HCT116 (cell line): ENCODE measurements at regions of chr12 and their contacts with region 1.

Region 1: DNA sequence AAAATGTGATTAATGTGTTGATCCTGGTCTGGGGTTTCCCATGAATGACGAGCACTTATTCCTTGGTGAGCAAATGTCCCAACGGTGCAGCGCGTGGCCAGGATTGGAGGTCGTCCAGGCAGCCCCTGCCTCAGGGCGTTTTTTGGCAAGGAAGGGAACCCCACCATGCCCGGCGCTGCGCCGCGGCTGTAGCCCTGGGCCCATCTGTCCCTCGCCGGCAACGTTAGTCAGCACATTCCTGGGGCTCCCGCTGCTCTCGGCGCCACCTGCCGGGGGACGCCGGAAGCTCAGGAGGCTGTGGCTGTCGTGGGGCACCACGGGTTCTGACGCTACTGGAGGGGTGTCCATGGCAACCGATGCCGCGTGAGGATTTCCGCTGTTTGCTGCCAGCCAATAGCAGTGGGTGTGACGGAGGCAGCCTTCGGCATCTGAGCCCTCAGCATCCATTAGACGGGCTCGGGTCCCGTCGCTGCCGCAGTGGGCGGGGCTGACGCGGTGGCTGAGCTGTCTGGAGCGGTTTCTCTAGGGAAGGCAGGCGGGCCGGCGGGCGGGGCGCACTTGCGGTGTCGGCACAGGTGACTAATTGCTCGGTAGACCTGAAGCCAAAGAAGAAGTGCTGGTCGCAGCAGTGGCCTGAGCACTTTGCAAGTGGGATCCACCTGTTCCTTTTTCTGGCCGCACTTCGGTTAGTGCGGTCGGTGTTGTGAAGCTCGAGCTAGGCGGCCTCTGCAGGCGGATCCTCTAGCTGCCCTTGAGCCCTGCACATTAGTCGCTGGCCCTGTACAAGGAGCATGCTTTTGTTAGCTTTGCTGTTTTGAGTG is 29.5 kb downstream of the RAB35 start:
- DNase-seq: peak; percentile 98
- ATAC-seq: peak; percentile 94
- H3K4me3 ChIP-seq: peak overlapping the region; percentile 42 to 52
- H3K27ac ChIP-seq: peak overlapping the region; percentile 67
- H3K4me1 ChIP-seq: peaks cover 18 to 21% of the 10 kb centered on the region in 2 experiments
- H3K27me3 ChIP-seq: no peaks in the 10 kb centered on the region
- CTCF ChIP-seq: peak; percentile 87 to 98 (median 92)
- POLR2A ChIP-seq: no peak
- RAD21 ChIP-seq: peak; percentile 87

Region 2: GRCh38 chr12:119931402-119931801 is 155.6 kb before region 1 on chr12:
- CTCF ChIA-PET with region 1: interaction called, 3 read pairs
- POLR2A ChIA-PET with region 1: no interaction called
- RAD21 ChIA-PET with region 1: no interaction called
- intact Hi-C with region 1: loop called (anchors 2 kb)
- DNase-seq: no peak
- ATAC-seq: no peak
- H3K4me3 ChIP-seq: no peak overlapping the region
- H3K27ac ChIP-seq: no peak overlapping the region
- H3K4me1 ChIP-seq: no peaks in the 10 kb centered on the region
- H3K27me3 ChIP-seq: no peaks in the 10 kb centered on the region
- CTCF ChIP-seq: no peak
- POLR2A ChIP-seq: no peak
- RAD21 ChIP-seq: no peak

Region 3: DNA sequence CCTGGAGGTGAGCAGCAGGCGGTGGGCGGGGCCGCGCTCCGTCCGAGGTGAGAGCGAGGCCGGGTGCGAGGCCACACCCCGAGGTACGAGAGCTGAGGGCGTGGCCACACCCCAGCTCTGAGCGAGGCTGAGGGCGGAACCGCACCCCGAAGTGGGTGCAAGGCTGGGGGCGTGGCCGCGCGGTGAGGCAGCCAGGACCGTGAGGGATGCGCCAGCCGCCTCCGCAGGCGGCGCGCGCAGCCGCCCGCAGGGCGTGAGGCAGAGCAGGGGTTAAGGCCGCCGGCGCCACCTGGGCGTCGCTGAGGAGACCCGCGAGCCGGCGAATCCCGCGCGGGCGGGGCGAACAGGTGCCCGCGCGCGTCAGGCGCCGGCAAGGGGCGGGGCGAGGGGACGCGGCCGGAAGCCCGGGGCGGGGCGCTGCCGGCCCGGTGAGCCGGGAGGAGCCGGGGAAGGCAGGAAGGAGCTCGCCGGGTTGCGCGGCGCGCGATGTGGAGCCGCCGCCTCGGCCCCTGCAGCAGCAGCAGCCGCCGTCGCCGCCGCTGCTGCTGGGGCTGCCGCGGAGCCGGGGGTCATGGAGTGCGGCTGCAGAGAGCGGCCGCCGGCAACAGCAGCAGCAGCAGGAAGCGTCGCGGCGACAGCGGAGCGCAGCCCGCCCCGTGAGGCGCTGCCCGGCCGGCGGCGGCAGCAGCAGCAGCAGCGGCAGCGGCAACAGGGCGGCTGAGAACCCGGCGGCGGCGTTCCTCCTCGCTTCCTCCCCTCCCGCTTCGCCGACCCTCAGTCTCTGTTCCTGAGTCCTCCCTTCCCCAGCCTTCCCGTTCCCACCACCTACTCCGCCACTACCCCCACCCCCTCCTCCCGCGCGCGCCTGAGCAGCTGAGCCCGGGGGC is 98.0 kb before region 1 on chr12 and contains the start of gene BICDL1:
- CTCF ChIA-PET with region 1: interaction called, 5 read pairs
- POLR2A ChIA-PET with region 1: no interaction called
- RAD21 ChIA-PET with region 1: no interaction called
- intact Hi-C with region 1: loop called (anchors 2 kb)
- DNase-seq: peak; percentile 93
- ATAC-seq: peak; percentile 91
- H3K4me3 ChIP-seq: peak within 1 kb of the TSS; percentile 44 to 61
- H3K27ac ChIP-seq: peak within 1 kb of the TSS; percentile 61
- H3K4me1 ChIP-seq: peaks cover 10 to 21% of the 10 kb centered on the region in 2 experiments
- H3K27me3 ChIP-seq: no peaks in the 10 kb centered on the region
- CTCF ChIP-seq: no peak
- POLR2A ChIP-seq: no peak
- RAD21 ChIP-seq: 0 out of 2 replicates have a peak, but pooled peaks have one; percentile 1
- total RNA-seq, gene BICDL1: 18.2 TPM